Dendritic cell treated with granulocyte-macrophage colony-stimulating factor and Interleukin-4, amounts not matched to agents 40 ng/mL and 50 ng/mL, for 4 days (primary cell): ENCODE measurements at regions of chr19 and their contacts with region 1.

Region 1: DNA sequence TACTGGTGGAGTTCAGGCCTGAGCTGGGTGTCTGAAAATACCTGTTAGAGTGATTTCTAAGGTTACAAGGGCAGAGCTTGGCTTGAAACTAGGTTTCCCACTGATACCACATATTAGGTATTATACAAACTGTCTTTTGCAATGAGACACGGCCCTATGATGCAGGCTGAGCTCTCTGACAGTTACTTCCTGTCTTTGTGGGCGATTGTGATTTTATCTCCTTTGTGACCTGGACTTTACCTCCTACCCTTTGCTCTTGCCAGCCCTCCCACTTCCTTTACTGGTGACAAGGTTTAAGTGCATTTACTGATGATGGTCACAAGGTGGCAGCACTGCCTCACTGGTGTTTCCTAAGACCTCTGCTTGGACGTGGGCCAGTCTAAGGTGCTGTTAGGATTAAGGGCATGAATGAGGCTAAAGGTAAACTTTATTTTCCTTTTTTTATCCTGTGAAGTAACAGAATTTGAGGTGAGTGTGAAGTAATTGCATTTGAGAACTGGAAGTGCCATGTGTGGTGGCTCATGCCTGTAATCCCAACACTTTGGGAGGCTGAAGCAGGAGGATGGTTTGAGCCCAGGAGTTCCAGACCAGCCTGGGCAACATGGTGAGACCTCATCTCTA is 7.7 kb upstream of the CXCL17 start:
- H3K4me3 Mint-ChIP-seq: no peak overlapping the region
- H3K27ac Mint-ChIP-seq: no peak overlapping the region
- H3K4me1 Mint-ChIP-seq: peaks cover 23% of the 10 kb centered on the region
- H3K27me3 Mint-ChIP-seq: peaks cover 36% of the 10 kb centered on the region

Region 2: GRCh38 chr19:42075616-42076379 is 374.6 kb before region 1 on chr19 and contains the start of gene ZNF574:
- intact Hi-C with region 1: no loop called
- H3K4me3 Mint-ChIP-seq: peak within 1 kb of the TSS; percentile 98
- H3K27ac Mint-ChIP-seq: peak within 1 kb of the TSS; percentile 99
- H3K4me1 Mint-ChIP-seq: peaks cover 32% of the 10 kb centered on the region
- H3K27me3 Mint-ChIP-seq: peaks cover 5% of the 10 kb centered on the region

Region 3: GRCh38 chr19:42529248-42529764 is 78.9 kb after region 1 on chr19:
- intact Hi-C with region 1: loop called (anchors 1 kb)
- H3K4me3 Mint-ChIP-seq: no peak overlapping the region
- H3K27ac Mint-ChIP-seq: no peak overlapping the region
- H3K4me1 Mint-ChIP-seq: peaks cover 10% of the 10 kb centered on the region
- H3K27me3 Mint-ChIP-seq: peaks cover 60% of the 10 kb centered on the region

Region 4: DNA sequence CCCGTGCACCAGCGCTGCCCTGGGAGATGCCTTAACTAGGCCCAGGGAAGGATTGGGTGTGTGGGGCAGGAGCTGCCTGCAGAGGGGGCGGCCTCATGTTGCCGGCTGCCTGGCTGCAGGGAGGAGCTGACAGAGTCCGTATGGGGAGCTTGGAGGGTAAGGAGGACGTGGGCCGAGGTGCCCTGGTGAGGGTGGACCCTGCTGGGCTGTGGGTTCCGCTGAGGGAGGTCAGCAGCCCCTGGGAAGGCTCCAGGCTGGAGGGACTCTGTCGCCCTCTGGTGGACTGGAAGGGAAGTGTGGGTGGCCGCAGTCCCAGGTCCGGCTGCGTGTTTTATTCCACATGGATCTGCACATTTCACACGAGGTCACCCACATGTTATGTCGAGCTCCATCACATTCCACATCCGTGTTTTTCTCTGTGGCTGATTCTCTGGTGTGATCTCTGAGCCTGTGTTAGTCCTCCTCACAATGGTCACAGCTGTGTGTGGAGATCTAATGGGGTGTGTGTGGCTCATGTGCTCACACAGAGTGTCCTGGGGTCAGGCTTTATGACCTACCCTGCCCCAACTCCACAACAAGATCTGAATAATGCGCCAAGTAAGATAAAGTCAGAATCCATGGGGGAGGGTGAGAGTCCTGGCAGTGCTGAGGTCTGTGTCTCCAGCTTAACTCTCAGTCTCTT is 146.1 kb after region 1 on chr19:
- intact Hi-C with region 1: loop called (anchors 1 kb)
- H3K4me3 Mint-ChIP-seq: no peak overlapping the region
- H3K27ac Mint-ChIP-seq: no peak overlapping the region
- H3K4me1 Mint-ChIP-seq: peaks cover 23% of the 10 kb centered on the region
- H3K27me3 Mint-ChIP-seq: peaks cover 71% of the 10 kb centered on the region